Activated CD4-positive, alpha-beta T cell treated with anti-CD3 and anti-CD28 coated beads for 36 hours (primary cell): ENCODE measurements at regions of chr18 and their contacts with region 1.

Region 1: DNA sequence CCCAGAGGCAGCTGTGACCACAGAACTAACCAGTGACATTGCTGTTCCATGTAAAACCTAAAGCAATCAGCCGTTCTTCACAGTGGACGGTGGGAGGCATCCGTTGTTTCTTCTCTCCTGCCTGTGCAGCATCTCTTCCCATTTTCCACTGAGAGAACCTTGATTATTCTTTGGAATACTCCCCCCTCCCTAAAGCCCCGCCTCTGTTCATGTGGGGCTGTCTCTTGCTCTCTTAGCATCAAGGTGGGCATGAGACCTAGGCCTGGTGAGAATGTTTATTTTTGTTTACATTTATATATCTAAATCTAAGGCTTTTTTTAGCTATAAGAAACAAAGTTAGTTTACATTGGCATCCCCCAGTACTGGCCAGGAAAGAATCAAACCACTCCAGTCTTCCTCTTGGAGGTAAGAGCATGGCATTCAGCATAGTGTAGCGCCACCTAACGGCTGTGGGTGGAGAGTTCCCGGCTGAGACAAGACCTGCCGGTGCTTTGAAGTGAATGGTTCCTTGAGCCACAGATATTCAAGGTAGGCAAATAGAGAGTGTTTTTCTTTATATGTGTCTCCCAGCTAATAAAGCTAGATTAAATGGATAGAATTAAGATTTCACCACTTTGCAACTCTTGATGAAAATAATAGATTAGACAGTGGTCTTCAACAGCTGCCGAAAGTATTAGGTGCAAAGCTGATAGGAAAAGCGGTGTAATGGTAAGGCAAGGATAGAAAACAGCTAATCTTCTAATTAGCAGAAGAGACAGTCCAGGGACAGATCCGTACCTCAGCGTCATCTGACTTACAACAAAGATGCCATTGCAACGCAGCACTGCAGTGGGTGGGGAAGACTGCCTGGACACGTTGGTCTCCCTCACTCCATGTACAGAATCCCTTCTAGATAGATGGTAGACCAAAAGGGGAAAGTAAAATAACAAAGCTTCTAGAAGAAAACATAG is 219.6 kb upstream of the RAB12 start:
- DNase-seq: peak; percentile 79
- ATAC-seq: peak; percentile 58
- H3K4me3 Mint-ChIP-seq: no peak overlapping the region
- H3K27ac Mint-ChIP-seq: no peak overlapping the region
- H3K4me1 Mint-ChIP-seq: no peaks in the 10 kb centered on the region
- H3K27me3 Mint-ChIP-seq: no peaks in the 10 kb centered on the region

Region 2: GRCh38 chr18:7221424-7222155 is 1168.1 kb before region 1 on chr18:
- CTCF ChIA-PET with region 1: no interaction called
- POLR2A ChIA-PET with region 1: no interaction called
- intact Hi-C with region 1: loop called in 1 of 2 experiments (anchors 2 kb)
- DNase-seq: peak; percentile 39
- ATAC-seq: no peak
- H3K4me3 Mint-ChIP-seq: no peak overlapping the region
- H3K27ac Mint-ChIP-seq: no peak overlapping the region
- H3K4me1 Mint-ChIP-seq: no peaks in the 10 kb centered on the region
- H3K27me3 Mint-ChIP-seq: peaks cover 5% of the 10 kb centered on the region

Region 3: DNA sequence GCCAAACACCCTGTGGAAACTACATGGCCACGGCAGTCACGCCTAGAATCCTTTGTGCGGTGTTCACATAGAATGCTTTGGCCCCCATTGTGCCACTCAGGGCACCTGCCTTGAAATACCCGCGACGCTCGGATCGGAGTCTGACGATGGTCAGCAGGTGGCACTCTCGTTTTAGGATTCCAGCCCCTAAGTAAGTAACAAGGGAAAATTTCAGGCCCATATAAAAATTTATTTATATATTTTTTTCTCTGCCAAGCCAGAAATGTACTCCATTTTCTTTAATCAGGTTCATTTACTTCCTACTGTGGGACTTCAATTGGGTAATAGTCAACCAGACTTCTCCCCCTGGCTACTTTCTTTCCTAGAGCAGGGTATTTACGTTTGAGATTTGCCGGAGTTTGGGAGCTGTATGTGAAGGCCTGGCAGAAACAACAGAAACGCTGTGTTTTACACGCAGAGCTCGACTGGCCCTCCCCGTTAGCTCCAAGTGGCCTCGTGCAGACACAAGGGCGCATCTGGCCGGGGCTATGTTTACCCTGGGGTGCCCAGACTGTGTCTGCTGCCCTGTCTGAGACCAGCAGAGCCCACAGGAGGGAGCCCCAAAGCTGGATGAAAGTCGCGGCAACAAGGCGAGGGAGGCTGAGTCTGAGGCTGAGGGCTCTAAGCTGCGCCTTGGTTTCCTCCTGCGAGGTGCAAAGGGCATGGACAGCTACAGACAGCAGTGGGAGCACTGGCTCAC is 1117.2 kb before region 1 on chr18:
- CTCF ChIA-PET with region 1: no interaction called
- POLR2A ChIA-PET with region 1: no interaction called
- intact Hi-C with region 1: loop called in 1 of 2 experiments (anchors 10 kb)
- DNase-seq: peak; percentile 42
- ATAC-seq: no peak
- H3K4me3 Mint-ChIP-seq: no peak overlapping the region
- H3K27ac Mint-ChIP-seq: no peak overlapping the region
- H3K4me1 Mint-ChIP-seq: no peaks in the 10 kb centered on the region
- H3K27me3 Mint-ChIP-seq: peaks cover 7% of the 10 kb centered on the region

Region 4: DNA sequence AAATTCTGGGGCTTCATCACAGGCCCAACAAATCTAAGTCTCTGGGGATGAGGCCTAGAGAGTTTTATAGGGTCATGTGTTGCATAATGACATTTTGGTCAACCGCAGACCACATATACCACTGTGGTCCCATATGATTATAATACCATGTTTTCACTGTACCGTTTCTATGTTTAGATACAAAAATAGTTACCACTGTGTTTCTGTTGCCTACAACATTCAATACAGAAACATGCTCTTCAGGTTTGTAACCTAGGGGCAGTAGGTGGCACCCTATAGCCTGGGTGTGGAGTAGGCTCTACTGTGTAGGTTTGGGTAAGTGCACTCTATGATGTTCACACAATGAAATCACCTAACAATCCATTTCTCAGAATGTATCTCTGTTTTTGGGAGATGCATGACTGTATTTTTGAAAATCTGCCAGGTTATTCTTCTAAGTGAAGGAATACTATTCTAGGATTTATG is 337.4 kb before region 1 on chr18:
- CTCF ChIA-PET with region 1: no interaction called
- POLR2A ChIA-PET with region 1: no interaction called
- intact Hi-C with region 1: loop called in 1 of 2 experiments (anchors 10 kb)
- DNase-seq: peak; percentile 25
- ATAC-seq: peak; percentile 76
- H3K4me3 Mint-ChIP-seq: no peak overlapping the region
- H3K27ac Mint-ChIP-seq: no peak overlapping the region
- H3K4me1 Mint-ChIP-seq: peaks cover 28% of the 10 kb centered on the region
- H3K27me3 Mint-ChIP-seq: no peaks in the 10 kb centered on the region